CD8-positive, alpha-beta T cell (primary cell): ENCODE measurements at regions of chr6 and their contacts with region 1.

Region 1: GRCh38 chr6:109187399-109188114 is 92.2 kb downstream of the CEP57L1 start:
- DNase-seq: peak; percentile 24 to 75 (median 64)
- ATAC-seq: peak; percentile 96
- H3K4me3 ChIP-seq: no peak overlapping the region
- H3K4me3 Mint-ChIP-seq: no peak overlapping the region
- H3K27ac ChIP-seq: no peak overlapping the region
- H3K27ac Mint-ChIP-seq: no peak overlapping the region
- H3K4me1 ChIP-seq: no peaks in the 10 kb centered on the region
- H3K4me1 Mint-ChIP-seq: peaks cover 2% of the 10 kb centered on the region
- H3K27me3 ChIP-seq: peaks cover 3 to 6% of the 10 kb centered on the region in 2 experiments
- H3K27me3 Mint-ChIP-seq: peaks cover 11% of the 10 kb centered on the region
- CTCF ChIP-seq: peak; percentile 88

Region 2: DNA sequence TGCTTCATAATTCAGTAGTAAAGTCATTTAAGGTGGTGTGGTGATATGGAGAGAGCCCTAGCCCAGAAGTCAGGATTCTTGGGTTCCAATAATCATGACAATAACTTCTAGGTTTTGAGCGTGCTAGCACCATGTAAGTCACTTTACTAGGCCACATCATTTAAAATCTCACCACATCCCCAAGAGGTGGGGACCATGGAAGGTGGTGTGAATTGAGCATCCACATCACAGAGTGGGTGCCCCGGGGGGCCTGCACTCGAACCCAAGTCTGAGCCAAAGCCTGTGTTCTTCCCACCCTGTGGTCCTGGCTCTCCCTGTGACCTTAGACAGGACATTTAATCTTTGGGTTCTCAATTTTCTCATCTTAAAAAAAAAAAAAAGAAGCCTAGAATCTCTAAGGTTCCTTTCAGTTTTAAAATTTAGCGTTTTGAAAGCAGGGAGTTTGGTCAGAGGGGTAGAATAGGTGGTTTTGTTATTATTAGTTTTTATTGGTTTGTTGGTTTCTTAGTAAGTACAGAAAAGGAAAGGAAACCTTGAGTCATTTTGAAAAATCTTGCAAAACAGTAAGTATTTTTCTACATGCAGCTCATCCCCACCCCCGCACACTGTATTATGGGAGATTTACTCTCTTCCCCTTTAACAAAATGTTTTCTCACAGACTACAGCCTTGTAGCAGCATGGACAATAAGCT is 312.9 kb before region 1 on chr6:
- CTCF ChIA-PET with region 1: no interaction called
- POLR2A ChIA-PET with region 1: no interaction called
- intact Hi-C with region 1: no loop called
- DNase-seq: peak in 6 of 9 experiments; percentile 9 to 60 (median 34)
- ATAC-seq: peak; percentile 45
- H3K4me3 ChIP-seq: peak overlapping the region in 1 of 2 experiments; percentile 31
- H3K4me3 Mint-ChIP-seq: peak overlapping the region; percentile 15
- H3K27ac ChIP-seq: peak overlapping the region; percentile 13 to 79
- H3K27ac Mint-ChIP-seq: peak overlapping the region; percentile 85
- H3K4me1 ChIP-seq: peaks cover 35% of the 10 kb centered on the region
- H3K4me1 Mint-ChIP-seq: peaks cover 46% of the 10 kb centered on the region
- H3K27me3 ChIP-seq: no peaks in the 10 kb centered on the region
- H3K27me3 Mint-ChIP-seq: no peaks in the 10 kb centered on the region
- CTCF ChIP-seq: no peak

Region 3: GRCh38 chr6:109389650-109390274 is 202.2 kb after region 1 on chr6:
- CTCF ChIA-PET with region 1: interaction called, 118 read pairs
- POLR2A ChIA-PET with region 1: no interaction called
- intact Hi-C with region 1: no loop called
- DNase-seq: no peak
- ATAC-seq: no peak
- H3K4me3 ChIP-seq: no peak overlapping the region
- H3K4me3 Mint-ChIP-seq: no peak overlapping the region
- H3K27ac ChIP-seq: no peak overlapping the region
- H3K27ac Mint-ChIP-seq: no peak overlapping the region
- H3K4me1 ChIP-seq: peaks cover 4% of the 10 kb centered on the region
- H3K4me1 Mint-ChIP-seq: peaks cover 20% of the 10 kb centered on the region
- H3K27me3 ChIP-seq: no peaks in the 10 kb centered on the region
- H3K27me3 Mint-ChIP-seq: no peaks in the 10 kb centered on the region
- CTCF ChIP-seq: no peak

Region 4: GRCh38 chr6:109455502-109456282 is 268.1 kb after region 1 on chr6 and contains the start of gene MICAL1:
- CTCF ChIA-PET with region 1: interaction called, 17 read pairs
- POLR2A ChIA-PET with region 1: no interaction called
- intact Hi-C with region 1: no loop called
- DNase-seq: peak; percentile 53 to 91 (median 77)
- ATAC-seq: peak; percentile 58
- H3K4me3 ChIP-seq: peak within 1 kb of the TSS; percentile 93 to 99
- H3K4me3 Mint-ChIP-seq: peak within 1 kb of the TSS; percentile 97
- H3K27ac ChIP-seq: peak within 1 kb of the TSS; percentile 89 to 98
- H3K27ac Mint-ChIP-seq: peak within 1 kb of the TSS; percentile 98
- H3K4me1 ChIP-seq: peaks cover 55% of the 10 kb centered on the region
- H3K4me1 Mint-ChIP-seq: peaks cover 65% of the 10 kb centered on the region
- H3K27me3 ChIP-seq: no peaks in the 10 kb centered on the region
- H3K27me3 Mint-ChIP-seq: no peaks in the 10 kb centered on the region
- CTCF ChIP-seq: no peak
- total RNA-seq, gene MICAL1: 68.0 to 76.4 TPM

Region 5: GRCh38 chr6:109526905-109527628 is 339.5 kb after region 1 on chr6:
- CTCF ChIA-PET with region 1: interaction called, 4 read pairs
- POLR2A ChIA-PET with region 1: no interaction called
- intact Hi-C with region 1: loop called (anchors 1 to 5 kb)
- DNase-seq: peak in 8 of 9 experiments; percentile 31 to 74 (median 55)
- ATAC-seq: peak; percentile 68
- H3K4me3 ChIP-seq: no peak overlapping the region
- H3K4me3 Mint-ChIP-seq: no peak overlapping the region
- H3K27ac ChIP-seq: no peak overlapping the region
- H3K27ac Mint-ChIP-seq: no peak overlapping the region
- H3K4me1 ChIP-seq: no peaks in the 10 kb centered on the region
- H3K4me1 Mint-ChIP-seq: peaks cover 3% of the 10 kb centered on the region
- H3K27me3 ChIP-seq: no peaks in the 10 kb centered on the region
- H3K27me3 Mint-ChIP-seq: no peaks in the 10 kb centered on the region
- CTCF ChIP-seq: peak; percentile 58

Region 6: DNA sequence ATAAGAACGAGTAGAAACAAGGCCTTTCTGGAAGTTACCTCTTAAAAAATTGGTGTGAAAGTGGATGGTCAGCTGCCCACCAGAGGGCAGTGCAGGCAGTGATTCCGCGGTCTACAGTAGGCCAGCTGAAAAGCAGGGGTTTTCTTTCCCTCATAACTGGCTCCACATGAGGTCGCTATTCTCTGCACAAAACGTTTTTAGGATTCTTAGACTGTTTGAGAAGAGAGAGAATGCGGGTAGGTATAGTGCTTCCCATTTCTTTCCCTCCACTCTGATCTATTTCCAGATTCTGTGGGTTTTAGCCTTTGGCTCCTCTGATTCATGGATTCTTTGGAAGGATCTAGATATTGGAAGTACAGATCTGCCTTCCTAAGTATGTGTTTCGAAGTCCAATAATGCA is 517.7 kb after region 1 on chr6:
- CTCF ChIA-PET with region 1: interaction called, 4 read pairs
- POLR2A ChIA-PET with region 1: no interaction called
- intact Hi-C with region 1: loop called in 1 of 2 experiments (anchors 5 kb)
- DNase-seq: peak; percentile 50 to 90 (median 72)
- ATAC-seq: peak; percentile 98
- H3K4me3 ChIP-seq: no peak overlapping the region
- H3K4me3 Mint-ChIP-seq: no peak overlapping the region
- H3K27ac ChIP-seq: no peak overlapping the region
- H3K27ac Mint-ChIP-seq: no peak overlapping the region
- H3K4me1 ChIP-seq: peaks cover 10% of the 10 kb centered on the region
- H3K4me1 Mint-ChIP-seq: peaks cover 27% of the 10 kb centered on the region
- H3K27me3 ChIP-seq: no peaks in the 10 kb centered on the region
- H3K27me3 Mint-ChIP-seq: no peaks in the 10 kb centered on the region
- CTCF ChIP-seq: peak; percentile 82